ENCODE measurements at regions of chr20 and their contacts with region 1.

Region 1: DNA sequence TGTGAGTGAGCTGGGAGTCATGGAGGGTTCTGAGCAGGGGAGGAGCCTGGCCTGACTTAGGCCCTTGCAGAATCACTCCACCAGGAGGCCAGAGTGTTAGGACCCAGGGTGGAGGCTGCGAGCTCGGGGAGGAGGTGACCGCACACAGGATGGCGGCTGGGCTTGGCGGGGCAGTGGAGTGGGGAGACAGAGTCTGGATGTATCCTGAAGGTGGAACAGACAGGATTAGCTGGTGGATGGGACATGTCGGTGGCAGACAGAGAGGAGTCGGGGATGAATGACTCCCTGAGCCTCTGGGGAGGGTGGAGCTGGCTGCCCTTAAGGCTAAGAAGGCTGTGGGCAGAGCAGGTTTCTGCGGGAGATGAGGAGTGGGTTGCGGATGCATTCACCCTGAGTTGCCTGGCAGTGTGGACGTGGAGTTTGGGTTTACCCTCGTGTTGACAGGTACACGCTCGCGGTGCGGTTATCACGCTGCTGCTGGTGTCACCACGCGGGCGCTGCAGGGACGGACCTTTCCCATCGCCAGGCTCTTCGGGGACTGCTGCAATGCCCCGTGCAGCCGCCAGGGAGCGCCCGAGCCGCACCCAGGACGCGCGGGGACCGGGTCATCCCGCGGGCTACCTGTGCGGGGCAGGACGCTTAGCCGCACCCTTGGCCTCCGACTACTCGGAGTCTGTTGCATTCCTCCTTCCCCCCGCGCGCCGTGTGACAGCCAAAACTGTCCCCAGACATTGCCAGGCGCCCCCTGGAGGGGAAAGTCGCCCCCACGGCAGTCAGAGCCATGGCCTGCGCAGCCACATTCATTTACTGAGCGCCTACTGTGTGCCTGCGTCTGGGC is 43.0 kb upstream of the PTGIS start:
- DNase-seq: peak; percentile 88
- H3K4me3 Mint-ChIP-seq: peak overlapping the region; percentile 12
- H3K27ac Mint-ChIP-seq: peak overlapping the region; percentile 14
- H3K4me1 Mint-ChIP-seq: peaks cover 24% of the 10 kb centered on the region
- H3K27me3 Mint-ChIP-seq: peaks cover 8% of the 10 kb centered on the region

Region 2: GRCh38 chr20:49534255-49534712 is 76.6 kb before region 1 on chr20:
- CTCF ChIA-PET with region 1: interaction called, 764 read pairs
- POLR2A ChIA-PET with region 1: no interaction called
- intact Hi-C with region 1: no loop called
- DNase-seq: peak; percentile 74
- H3K4me3 Mint-ChIP-seq: no peak overlapping the region
- H3K27ac Mint-ChIP-seq: peak overlapping the region; percentile 69
- H3K4me1 Mint-ChIP-seq: peaks cover 21% of the 10 kb centered on the region
- H3K27me3 Mint-ChIP-seq: peaks cover 9% of the 10 kb centered on the region

Region 3: DNA sequence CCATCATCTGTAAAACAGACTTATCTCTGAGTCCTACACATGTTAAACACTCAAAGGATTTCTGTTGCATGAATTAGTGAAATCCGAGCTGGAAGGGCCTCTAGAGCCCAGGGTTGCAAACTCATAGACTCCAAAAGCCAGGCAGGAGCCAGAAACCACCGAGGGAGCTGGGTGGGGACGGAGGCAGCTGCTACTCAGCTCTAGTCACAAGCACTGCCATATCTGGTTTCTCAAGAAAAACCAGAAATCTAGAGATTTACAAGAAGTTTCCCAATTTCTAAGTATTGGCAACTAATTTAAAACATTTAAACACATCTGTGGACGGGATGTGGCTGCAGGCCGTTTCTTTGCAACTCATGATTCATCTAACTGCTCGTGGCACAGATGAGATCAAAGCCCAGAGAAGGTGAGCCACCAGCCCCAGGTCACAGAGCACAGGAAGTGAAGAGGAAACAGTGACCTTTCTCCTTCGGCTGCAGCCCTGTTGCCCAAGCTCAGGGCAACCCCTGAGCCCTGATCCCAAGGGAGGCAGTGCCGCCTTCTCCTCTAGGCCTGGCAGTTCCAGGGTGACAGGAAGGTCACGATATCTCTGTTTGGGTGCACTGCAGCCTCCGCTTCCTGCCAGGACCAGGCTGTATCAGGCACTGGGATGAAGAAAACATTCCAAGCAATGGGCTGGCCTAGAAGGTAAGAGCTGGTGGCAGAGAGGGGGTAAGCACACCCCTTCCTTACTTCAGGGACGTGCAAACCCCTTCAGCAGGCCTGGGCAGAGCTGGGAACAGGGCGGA is 16.6 kb before region 1 on chr20:
- CTCF ChIA-PET with region 1: interaction called, 83 read pairs
- POLR2A ChIA-PET with region 1: interaction called, 7 read pairs
- intact Hi-C with region 1: loop called (anchors 1 kb)
- DNase-seq: peak; percentile 92
- H3K4me3 Mint-ChIP-seq: peak overlapping the region; percentile 95
- H3K27ac Mint-ChIP-seq: peak overlapping the region; percentile 100
- H3K4me1 Mint-ChIP-seq: peaks cover 81% of the 10 kb centered on the region
- H3K27me3 Mint-ChIP-seq: no peaks in the 10 kb centered on the region

Region 4: DNA sequence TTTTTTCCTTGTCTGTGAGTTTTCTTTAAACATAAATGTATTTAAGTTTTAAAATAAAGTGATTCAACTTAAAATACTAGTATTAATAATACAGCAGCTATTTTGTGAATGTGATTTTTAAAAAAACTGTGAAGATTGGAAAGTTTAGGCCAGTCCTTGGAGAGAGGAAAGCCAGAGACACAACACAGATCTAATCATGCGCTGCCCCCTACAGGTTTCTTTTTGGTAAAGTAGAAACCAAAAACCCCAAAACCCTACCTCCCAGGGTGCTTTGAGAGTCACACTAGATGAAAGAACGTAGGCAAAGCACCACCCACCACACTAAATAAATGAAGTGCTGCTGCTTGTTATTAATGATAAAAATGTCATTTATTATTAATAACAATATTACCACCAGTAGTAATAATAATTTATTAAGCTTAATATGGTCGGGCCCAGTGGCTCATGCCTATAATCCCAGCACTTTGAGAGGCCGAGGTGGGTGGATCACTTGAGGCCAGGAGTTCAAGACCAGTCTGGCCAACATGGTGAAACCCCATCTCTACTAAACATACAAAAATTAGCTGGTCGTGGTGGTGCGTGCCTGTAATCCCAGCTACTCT is 235.4 kb after region 1 on chr20:
- CTCF ChIA-PET with region 1: interaction called, 184 read pairs
- POLR2A ChIA-PET with region 1: no interaction called
- intact Hi-C with region 1: loop called (anchors 1 kb)
- DNase-seq: peak; percentile 50
- H3K4me3 Mint-ChIP-seq: no peak overlapping the region
- H3K27ac Mint-ChIP-seq: no peak overlapping the region
- H3K4me1 Mint-ChIP-seq: no peaks in the 10 kb centered on the region
- H3K27me3 Mint-ChIP-seq: no peaks in the 10 kb centered on the region

Region 5: DNA sequence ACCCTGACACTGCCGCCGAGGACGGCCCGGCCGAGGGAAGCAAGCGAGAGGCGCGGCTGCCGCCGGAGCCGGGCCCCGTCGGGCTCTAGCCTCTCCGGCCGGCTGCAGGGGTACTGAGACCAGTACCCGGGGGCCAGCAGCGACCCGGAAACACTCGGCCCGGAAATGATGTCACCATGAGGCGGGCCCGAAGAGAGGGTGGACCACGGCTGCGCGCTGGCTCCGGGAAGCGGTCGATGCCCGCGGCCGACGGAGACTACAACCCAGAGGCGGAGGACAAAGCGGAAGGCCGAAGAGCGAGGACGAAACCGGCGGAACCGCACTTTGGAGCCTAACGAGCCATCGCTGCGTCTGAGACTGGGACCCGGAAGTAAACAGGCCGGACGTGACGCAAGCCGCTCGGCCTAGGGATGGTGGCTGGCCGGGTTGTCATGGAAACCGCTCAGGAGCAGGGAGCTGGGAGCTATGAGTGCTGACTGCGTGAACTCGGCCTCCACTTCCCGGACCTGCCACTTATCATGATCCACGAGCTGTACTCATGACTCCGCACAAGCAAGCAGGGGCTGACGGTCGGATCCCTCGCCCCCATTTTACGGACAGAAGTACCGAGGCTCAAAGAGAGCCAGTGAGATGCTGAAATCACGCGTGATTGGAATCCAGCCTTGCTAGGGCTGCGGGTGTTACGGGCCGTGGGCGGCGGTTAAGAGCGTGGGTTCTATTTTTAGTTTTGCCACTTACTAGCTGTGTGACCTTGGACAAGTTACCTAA is 304.6 kb after region 1 on chr20 and contains the start of gene SPATA2:
- CTCF ChIA-PET with region 1: interaction called, 16 read pairs
- POLR2A ChIA-PET with region 1: no interaction called
- intact Hi-C with region 1: no loop called
- DNase-seq: peak; percentile 94
- H3K4me3 Mint-ChIP-seq: peak within 1 kb of the TSS; percentile 98
- H3K27ac Mint-ChIP-seq: peak within 1 kb of the TSS; percentile 98
- H3K4me1 Mint-ChIP-seq: peaks cover 31% of the 10 kb centered on the region
- H3K27me3 Mint-ChIP-seq: no peaks in the 10 kb centered on the region
- total RNA-seq, gene SPATA2: 7.9 to 8.6 TPM